Activated CD4-positive, alpha-beta T cell treated with anti-CD3 and anti-CD28 coated beads, Interleukin-2, amount 10 ng/mL, durations not matched to agents 24 days and 14 days (primary cell): ENCODE measurements at regions of chrX and their contacts with region 1.

Region 1: DNA sequence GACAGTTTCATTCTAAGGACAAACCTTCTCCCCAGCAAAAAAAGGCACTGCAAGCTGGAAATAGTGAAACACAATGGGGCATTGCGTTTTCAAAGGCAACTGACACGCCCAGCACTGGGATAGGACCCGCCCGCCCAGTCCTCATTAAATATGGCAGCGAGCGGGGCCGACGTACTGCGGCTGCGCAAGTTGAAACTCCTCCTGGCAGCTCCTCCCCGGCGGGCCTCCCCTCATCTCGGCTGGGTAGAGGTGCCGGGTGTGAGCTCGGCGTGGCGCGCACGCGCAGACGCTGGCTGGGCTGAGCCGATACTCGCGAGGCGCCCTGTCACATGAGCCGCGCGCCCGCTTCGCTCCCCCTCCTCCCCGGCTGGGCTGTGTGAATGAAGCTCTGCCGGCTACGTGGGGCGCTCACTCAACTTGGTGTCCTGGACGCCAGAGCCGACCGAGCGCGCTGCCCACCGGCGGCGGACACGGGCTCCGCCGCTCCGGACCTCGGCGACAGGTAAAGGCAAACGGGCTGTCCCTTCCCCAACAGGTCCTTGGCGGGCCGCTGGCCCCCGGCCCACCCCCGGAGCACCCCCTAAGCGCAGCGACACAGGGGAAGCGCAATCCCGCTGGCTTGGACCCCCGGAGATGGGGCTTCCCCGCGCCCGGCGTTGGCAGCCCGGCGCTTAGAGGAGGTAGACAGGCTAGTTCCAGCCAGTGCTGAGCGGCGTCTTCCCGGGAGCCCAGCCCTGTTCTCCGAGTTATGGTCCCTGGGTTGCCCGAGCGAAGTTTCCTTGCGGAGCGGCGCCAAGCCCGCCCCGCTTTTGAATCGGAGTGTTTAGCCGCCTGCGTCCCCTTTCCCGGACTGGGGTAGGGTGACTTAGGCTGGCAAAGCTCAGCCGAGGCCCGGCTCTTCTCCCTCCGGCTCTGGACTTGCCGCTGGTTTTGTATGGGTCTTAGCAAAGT is at the start of gene CLCN5:
- DNase-seq: peak; percentile 98
- H3K4me3 Mint-ChIP-seq: peak within 1 kb of the TSS; percentile 80
- H3K27ac Mint-ChIP-seq: peak within 1 kb of the TSS; percentile 68
- H3K4me1 Mint-ChIP-seq: peaks cover 6% of the 10 kb centered on the region
- H3K27me3 Mint-ChIP-seq: no peaks in the 10 kb centered on the region
- total RNA-seq, gene CLCN5: 4.2 and 5.6 TPM in 2 replicates

Region 2: GRCh38 chrX:49840679-49841078 is 81.9 kb before region 1 on chrX:
- intact Hi-C with region 1: no loop called
- DNase-seq: peak; percentile 66
- H3K4me3 Mint-ChIP-seq: no peak overlapping the region
- H3K27ac Mint-ChIP-seq: no peak overlapping the region
- H3K4me1 Mint-ChIP-seq: no peaks in the 10 kb centered on the region
- H3K27me3 Mint-ChIP-seq: no peaks in the 10 kb centered on the region

Region 3: GRCh38 chrX:49884290-49884862 is 38.2 kb before region 1 on chrX:
- intact Hi-C with region 1: loop called (anchors 1 kb)
- DNase-seq: peak; percentile 85
- H3K4me3 Mint-ChIP-seq: no peak overlapping the region
- H3K27ac Mint-ChIP-seq: peak overlapping the region; percentile 66
- H3K4me1 Mint-ChIP-seq: peaks cover 11% of the 10 kb centered on the region
- H3K27me3 Mint-ChIP-seq: peaks cover 3% of the 10 kb centered on the region